ENCODE measurements at regions of chr2 and their contacts with region 1.

Region 1: GRCh38 chr2:57207191-57207590 is 839.4 kb upstream of the VRK2 start:
- DNase-seq: no peak
- H3K4me3 ChIP-seq: no peak overlapping the region
- H3K27ac ChIP-seq: no peak overlapping the region
- H3K4me1 ChIP-seq: no peaks in the 10 kb centered on the region
- H3K27me3 ChIP-seq: no peaks in the 10 kb centered on the region
- CTCF ChIP-seq: no peak
- EP300 ChIP-seq: no peak
- POLR2A ChIP-seq: no peak

Region 2: GRCh38 chr2:56084111-56084936 is 1122.9 kb before region 1 on chr2:
- in situ Hi-C with region 1: no loop called
- intact Hi-C with region 1: no loop called
- DNase-seq: no peak
- H3K4me3 ChIP-seq: no peak overlapping the region
- H3K27ac ChIP-seq: no peak overlapping the region
- H3K4me1 ChIP-seq: no peaks in the 10 kb centered on the region
- H3K27me3 ChIP-seq: no peaks in the 10 kb centered on the region
- CTCF ChIP-seq: no peak
- EP300 ChIP-seq: no peak
- POLR2A ChIP-seq: no peak

Region 3: GRCh38 chr2:57160976-57161375 is 46.2 kb before region 1 on chr2:
- in situ Hi-C with region 1: no loop called
- intact Hi-C with region 1: no loop called
- DNase-seq: no peak
- H3K4me3 ChIP-seq: no peak overlapping the region
- H3K27ac ChIP-seq: no peak overlapping the region
- H3K4me1 ChIP-seq: no peaks in the 10 kb centered on the region
- H3K27me3 ChIP-seq: no peaks in the 10 kb centered on the region
- CTCF ChIP-seq: no peak
- EP300 ChIP-seq: no peak
- POLR2A ChIP-seq: no peak

Region 4: GRCh38 chr2:57182916-57183315 is 24.3 kb before region 1 on chr2:
- in situ Hi-C with region 1: no loop called
- intact Hi-C with region 1: loop called (anchors 2 kb)
- DNase-seq: no peak
- H3K4me3 ChIP-seq: no peak overlapping the region
- H3K27ac ChIP-seq: no peak overlapping the region
- H3K4me1 ChIP-seq: no peaks in the 10 kb centered on the region
- H3K27me3 ChIP-seq: no peaks in the 10 kb centered on the region
- CTCF ChIP-seq: no peak
- EP300 ChIP-seq: no peak
- POLR2A ChIP-seq: no peak